Dorsolateral prefrontal cortex (tissue), 120 donors: ENCODE measurements at regions of chrX and their contacts with region 1.

Region 1: GRCh38 chrX:48897621-48898306 is at the starts of genes PQBP1 and TIMM17B:
- DNase-seq: peak; percentile 79 to 95 (median 92)
- H3K4me3 ChIP-seq: peak within 1 kb of the TSS; percentile 46 to 83 (median 72)
- H3K27ac ChIP-seq: peak within 1 kb of the TSS in 58 of 59 donors; percentile 36 to 97 (median 88)
- H3K27me3 ChIP-seq: peaks cover 0 to 50% (median 5%) of the 10 kb centered on the region in 45 donors
- CTCF ChIP-seq: peak in 2 of 56 donors; percentile 12 to 13
- total RNA-seq, gene PQBP1: 42.9 to 91.7 (median 67.1) TPM
- total RNA-seq, gene TIMM17B: 22.3 to 50.4 (median 35.3) TPM

Region 2: GRCh38 chrX:48737213-48737938 is 160.4 kb before region 1 on chrX:
- intact Hi-C with region 1: loop called in 1 of 2 experiments (anchors 10 kb)
- DNase-seq: peak; percentile 75 to 93 (median 90)
- H3K4me3 ChIP-seq: peak overlapping the region; percentile 30 to 81 (median 65)
- H3K27ac ChIP-seq: peak overlapping the region in 58 of 59 donors; percentile 62 to 95 (median 88)
- H3K27me3 ChIP-seq: peaks cover 0 to 31% (median 3%) of the 10 kb centered on the region in 45 donors
- CTCF ChIP-seq: peak in 5 of 56 donors; percentile 1 to 12 (median 6)

Region 3: DNA sequence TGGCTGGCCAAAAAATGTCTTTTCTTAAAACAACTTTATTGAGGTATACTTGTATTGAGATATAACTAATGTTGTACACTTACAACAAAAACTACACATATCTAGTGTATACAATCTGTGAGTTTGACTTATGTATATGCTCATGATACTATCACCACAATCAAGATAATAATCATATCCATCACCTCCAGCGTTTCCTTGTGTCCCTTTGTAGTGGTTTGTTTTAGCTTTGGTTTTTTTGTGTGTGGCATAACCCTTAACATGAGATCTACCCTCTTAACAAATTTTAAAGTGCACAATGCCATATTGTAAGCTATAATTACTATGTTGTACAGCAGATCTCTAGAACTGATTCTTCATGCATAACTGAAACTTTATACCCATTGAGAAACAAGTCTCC is 48.9 kb before region 1 on chrX:
- intact Hi-C with region 1: no loop called
- DNase-seq: no peak
- H3K4me3 ChIP-seq: no peak overlapping the region
- H3K27ac ChIP-seq: no peak overlapping the region
- H3K27me3 ChIP-seq: peaks cover 0 to 71% (median 16%) of the 10 kb centered on the region in 45 donors
- CTCF ChIP-seq: no peak

Region 4: GRCh38 chrX:49059209-49060191 is 161.7 kb after region 1 on chrX:
- intact Hi-C with region 1: no loop called
- DNase-seq: no peak
- H3K4me3 ChIP-seq: peak overlapping the region in 1 of 59 donors; percentile 3
- H3K27ac ChIP-seq: no peak overlapping the region
- H3K27me3 ChIP-seq: peaks cover 0 to 35% (median 2%) of the 10 kb centered on the region in 45 donors
- CTCF ChIP-seq: no peak